PC-9 (cell line): ENCODE measurements at regions of chr1 and their contacts with region 1.

Region 1: GRCh38 chr1:183514235-183514634 is 41.9 kb downstream of the SMG7 start:
- DNase-seq: no peak
- H3K4me3 ChIP-seq: no peak overlapping the region
- H3K27ac ChIP-seq: peak overlapping the region; percentile 88
- H3K4me1 ChIP-seq: peaks cover 34% of the 10 kb centered on the region
- H3K27me3 ChIP-seq: no peaks in the 10 kb centered on the region
- CTCF ChIP-seq: no peak

Region 2: GRCh38 chr1:183487674-183488442 is 26.4 kb before region 1 on chr1:
- CTCF ChIA-PET with region 1: no interaction called
- POLR2A ChIA-PET with region 1: no interaction called
- intact Hi-C with region 1: no loop called
- DNase-seq: no peak
- H3K4me3 ChIP-seq: no peak overlapping the region
- H3K27ac ChIP-seq: no peak overlapping the region
- H3K4me1 ChIP-seq: peaks cover 23% of the 10 kb centered on the region
- H3K27me3 ChIP-seq: no peaks in the 10 kb centered on the region
- CTCF ChIP-seq: no peak

Region 3: DNA sequence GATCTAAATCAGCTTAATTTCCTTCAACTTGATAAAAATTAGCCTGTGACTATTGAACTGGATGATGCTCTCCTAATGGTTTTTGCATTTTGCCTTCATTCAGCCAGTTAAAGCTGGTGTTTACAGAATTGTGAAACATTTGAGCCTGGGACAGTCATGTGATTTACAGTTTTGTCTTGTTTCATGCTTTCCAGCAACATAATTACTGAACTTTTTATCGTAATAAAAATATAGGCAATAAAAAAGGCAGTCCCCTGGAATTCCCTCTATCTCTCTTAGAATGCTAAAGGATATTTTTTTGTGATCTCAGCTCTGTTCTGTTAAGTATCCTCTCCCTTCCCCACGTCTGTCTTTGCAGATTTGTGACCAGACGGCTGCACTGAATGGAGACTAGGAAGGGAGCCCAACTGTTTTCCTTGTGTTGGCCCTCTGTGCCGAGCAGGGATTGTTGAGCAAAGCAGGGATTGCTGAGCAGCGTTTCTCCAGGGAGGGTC is 220.4 kb after region 1 on chr1:
- CTCF ChIA-PET with region 1: interaction called, 10 read pairs
- POLR2A ChIA-PET with region 1: no interaction called
- intact Hi-C with region 1: no loop called
- DNase-seq: no peak
- H3K4me3 ChIP-seq: no peak overlapping the region
- H3K27ac ChIP-seq: peak overlapping the region; percentile 40; the same call in 1 of the 2 replicates
- H3K4me1 ChIP-seq: peaks cover 30% of the 10 kb centered on the region
- H3K27me3 ChIP-seq: no peaks in the 10 kb centered on the region
- CTCF ChIP-seq: no peak